ENCODE measurements at regions of chrX and their contacts with region 1.

Region 1: DNA sequence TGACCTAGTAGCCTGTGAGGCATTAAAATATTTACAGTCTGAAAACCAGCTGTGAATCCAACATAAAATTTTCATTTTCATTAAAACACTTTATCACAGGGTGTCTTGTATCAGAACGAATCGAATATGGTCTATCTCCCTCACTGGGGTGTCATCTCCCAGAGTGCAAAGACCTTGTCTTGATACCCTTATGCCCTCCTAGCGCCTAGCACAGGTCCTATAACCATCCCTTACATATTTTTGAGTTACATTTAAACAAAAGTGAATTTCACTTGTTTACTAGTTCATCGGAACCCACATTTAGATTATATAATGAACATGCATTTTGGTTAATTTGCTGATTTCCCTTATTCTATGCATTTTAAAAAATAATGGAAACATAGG is 14.0 kb downstream of the DIPK2B start:
- DNase-seq: no peak
- H3K4me3 ChIP-seq: no peak overlapping the region
- H3K27me3 ChIP-seq: no peaks in the 10 kb centered on the region
- CTCF ChIP-seq: no peak

Region 2: GRCh38 chrX:44931441-44931973 is 255.1 kb before region 1 on chrX:
- CTCF ChIA-PET with region 1: no interaction called
- POLR2A ChIA-PET with region 1: no interaction called
- DNase-seq: no peak
- H3K4me3 ChIP-seq: no peak overlapping the region
- H3K27me3 ChIP-seq: no peaks in the 10 kb centered on the region
- CTCF ChIP-seq: no peak

Region 3: DNA sequence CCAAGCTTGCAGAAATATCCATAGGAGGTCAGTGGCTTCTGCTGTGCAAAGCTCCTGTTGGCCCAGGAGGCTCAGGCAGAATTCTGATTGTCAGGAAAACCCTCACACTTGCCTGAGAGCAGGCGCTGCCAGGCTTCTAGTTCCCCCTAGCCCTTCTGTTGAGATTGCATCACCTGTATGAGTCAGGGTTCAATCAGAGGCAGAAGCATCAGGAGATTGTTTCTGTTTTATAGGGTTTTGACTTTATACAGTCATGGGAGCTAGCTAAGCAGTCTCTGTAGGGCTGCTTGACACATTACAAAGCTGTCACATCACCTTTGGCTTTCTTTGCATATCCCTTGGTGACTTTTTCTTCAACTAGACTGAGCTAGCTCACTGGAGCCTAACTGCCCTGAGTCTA is 13.7 kb before region 1 on chrX:
- CTCF ChIA-PET with region 1: interaction called, 10 read pairs
- POLR2A ChIA-PET with region 1: no interaction called
- DNase-seq: no peak
- H3K4me3 ChIP-seq: no peak overlapping the region
- H3K27me3 ChIP-seq: no peaks in the 10 kb centered on the region
- CTCF ChIP-seq: no peak

Region 4: GRCh38 chrX:45196701-45197100 is 10.1 kb after region 1 on chrX:
- CTCF ChIA-PET with region 1: interaction called, 23 read pairs
- POLR2A ChIA-PET with region 1: no interaction called
- DNase-seq: no peak
- H3K4me3 ChIP-seq: no peak overlapping the region
- H3K27me3 ChIP-seq: no peaks in the 10 kb centered on the region
- CTCF ChIP-seq: no peak

Region 5: GRCh38 chrX:45422216-45422925 is 235.7 kb after region 1 on chrX:
- CTCF ChIA-PET with region 1: no interaction called
- POLR2A ChIA-PET with region 1: no interaction called
- DNase-seq: peak; percentile 35
- H3K4me3 ChIP-seq: no peak overlapping the region
- H3K27me3 ChIP-seq: no peaks in the 10 kb centered on the region
- CTCF ChIP-seq: no peak

Measured in BJ (cell line).